HCT116 (cell line): ENCODE measurements at regions of chr7 and their contacts with region 1.

Region 1: GRCh38 chr7:158829342-158830210 is at the start of gene ESYT2:
- DNase-seq: peak; percentile 89
- ATAC-seq: peak; percentile 88
- H3K4me3 ChIP-seq: peak within 1 kb of the TSS; percentile 71 to 85
- H3K27ac ChIP-seq: peak within 1 kb of the TSS; percentile 96
- H3K4me1 ChIP-seq: peaks cover 9 to 26% of the 10 kb centered on the region in 2 experiments
- H3K27me3 ChIP-seq: no peaks in the 10 kb centered on the region
- CTCF ChIP-seq: no peak; a peak in 1 of 6 replicates
- POLR2A ChIP-seq: peak; percentile 96
- RAD21 ChIP-seq: no peak; the same call in 1 of the 2 replicates
- total RNA-seq, gene ESYT2: 68.2 TPM

Region 2: GRCh38 chr7:158704704-158705468 is 124.7 kb before region 1 on chr7 and contains the start of gene NCAPG2:
- CTCF ChIA-PET with region 1: no interaction called
- POLR2A ChIA-PET with region 1: no interaction called
- RAD21 ChIA-PET with region 1: no interaction called
- intact Hi-C with region 1: loop called (anchors 10 kb)
- DNase-seq: peak; percentile 95
- ATAC-seq: peak; percentile 97
- H3K4me3 ChIP-seq: peak within 1 kb of the TSS; percentile 96 to 98
- H3K27ac ChIP-seq: peak within 1 kb of the TSS; percentile 81
- H3K4me1 ChIP-seq: peaks cover 6 to 21% of the 10 kb centered on the region in 2 experiments; a peak in 3 of 4 replicates
- H3K27me3 ChIP-seq: no peaks in the 10 kb centered on the region
- CTCF ChIP-seq: peak in 1 of 3 experiments; percentile 17; a peak in 1 of 6 replicates
- POLR2A ChIP-seq: peak; percentile 24
- RAD21 ChIP-seq: peak; percentile 37; the same call in 1 of the 2 replicates
- total RNA-seq, gene NCAPG2: 73.1 TPM

Region 3: GRCh38 chr7:158856883-158857668 is 27.5 kb after region 1 on chr7:
- CTCF ChIA-PET with region 1: no interaction called
- POLR2A ChIA-PET with region 1: no interaction called
- RAD21 ChIA-PET with region 1: no interaction called
- intact Hi-C with region 1: loop called (anchors 1 kb)
- DNase-seq: no peak
- ATAC-seq: peak; percentile 48
- H3K4me3 ChIP-seq: peak overlapping the region; percentile 75 to 79
- H3K27ac ChIP-seq: peak overlapping the region; percentile 80
- H3K4me1 ChIP-seq: peaks cover 18 to 28% of the 10 kb centered on the region in 2 experiments
- H3K27me3 ChIP-seq: no peaks in the 10 kb centered on the region
- CTCF ChIP-seq: no peak
- POLR2A ChIP-seq: no peak
- RAD21 ChIP-seq: no peak

Region 4: GRCh38 chr7:158891922-158892321 is 62.3 kb after region 1 on chr7:
- CTCF ChIA-PET with region 1: no interaction called
- POLR2A ChIA-PET with region 1: no interaction called
- RAD21 ChIA-PET with region 1: no interaction called
- intact Hi-C with region 1: no loop called
- DNase-seq: no peak
- ATAC-seq: no peak
- H3K4me3 ChIP-seq: no peak overlapping the region
- H3K27ac ChIP-seq: no peak overlapping the region
- H3K4me1 ChIP-seq: no peaks in the 10 kb centered on the region
- H3K27me3 ChIP-seq: no peaks in the 10 kb centered on the region
- CTCF ChIP-seq: no peak
- POLR2A ChIP-seq: no peak
- RAD21 ChIP-seq: no peak